ENCODE measurements at regions of chr17 and their contacts with region 1.

Region 1: DNA sequence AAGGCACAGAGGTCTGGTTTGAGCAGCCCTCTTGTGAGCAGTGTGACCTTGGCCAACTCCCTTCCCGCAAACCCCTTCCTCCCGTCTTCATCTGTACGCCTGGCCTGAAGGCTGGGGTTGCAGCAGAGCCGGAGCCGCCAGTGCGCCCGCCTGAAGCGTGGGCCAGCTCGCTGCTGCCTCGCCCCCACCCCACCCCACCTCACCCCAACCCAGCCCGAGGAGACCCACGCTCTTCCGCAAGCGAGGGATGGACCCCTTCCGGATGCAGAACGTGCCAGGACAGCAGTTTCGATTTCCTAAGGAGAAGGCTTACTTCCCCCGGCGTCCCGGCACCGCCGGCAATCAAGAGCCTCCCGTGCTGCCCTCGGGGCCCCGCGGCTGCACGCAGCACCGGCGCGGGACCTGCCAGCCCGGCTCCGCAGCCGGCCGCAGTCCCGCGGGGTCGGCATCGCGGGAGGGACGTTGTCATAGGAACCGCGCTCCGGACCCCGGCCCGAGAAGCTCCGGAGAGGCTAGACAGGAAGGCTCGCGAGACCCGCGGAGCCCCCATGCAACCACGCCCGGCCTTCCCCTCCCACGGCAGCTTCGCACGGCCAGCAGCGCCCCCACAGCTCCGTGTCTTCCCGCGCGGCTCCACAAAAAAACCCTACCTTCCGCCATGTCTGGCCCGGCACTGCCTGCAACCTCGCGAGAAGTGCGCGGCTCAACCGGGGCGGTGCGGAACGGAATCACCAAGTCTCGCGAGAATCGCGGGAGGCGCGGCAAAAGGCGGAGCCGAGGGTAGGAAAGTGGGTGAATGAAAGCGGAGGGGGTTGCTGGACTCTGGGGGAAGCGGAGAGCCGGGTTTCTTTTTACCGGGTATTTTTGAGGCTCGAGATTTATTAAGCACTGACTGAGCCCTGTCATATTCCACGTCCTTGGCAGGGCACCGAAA is at the start of gene ANKFY1:
- DNase-seq: peak; percentile 95 to 98 (median 97)
- ATAC-seq: peak; percentile 97
- H3K4me3 ChIP-seq: peak within 1 kb of the TSS; percentile 75
- H3K4me3 Mint-ChIP-seq: peak within 1 kb of the TSS; percentile 95
- H3K27ac ChIP-seq: peak within 1 kb of the TSS; percentile 60 to 64
- H3K27ac Mint-ChIP-seq: peak within 1 kb of the TSS; percentile 75
- H3K4me1 ChIP-seq: peaks cover 32% of the 10 kb centered on the region
- H3K4me1 Mint-ChIP-seq: peaks cover 36% of the 10 kb centered on the region
- H3K27me3 ChIP-seq: no peaks in the 10 kb centered on the region
- H3K27me3 Mint-ChIP-seq: no peaks in the 10 kb centered on the region
- CTCF ChIP-seq: no peak
- total RNA-seq, gene ANKFY1: 31.8 to 39.1 TPM

Region 2: GRCh38 chr17:4221899-4222659 is 41.5 kb before region 1 on chr17:
- CTCF ChIA-PET with region 1: no interaction called
- POLR2A ChIA-PET with region 1: no interaction called
- intact Hi-C with region 1: no loop called
- DNase-seq: no peak
- ATAC-seq: no peak
- H3K4me3 ChIP-seq: no peak overlapping the region
- H3K4me3 Mint-ChIP-seq: no peak overlapping the region
- H3K27ac ChIP-seq: no peak overlapping the region
- H3K27ac Mint-ChIP-seq: no peak overlapping the region
- H3K4me1 ChIP-seq: no peaks in the 10 kb centered on the region
- H3K4me1 Mint-ChIP-seq: no peaks in the 10 kb centered on the region
- H3K27me3 ChIP-seq: no peaks in the 10 kb centered on the region
- H3K27me3 Mint-ChIP-seq: no peaks in the 10 kb centered on the region
- CTCF ChIP-seq: no peak

Region 3: DNA sequence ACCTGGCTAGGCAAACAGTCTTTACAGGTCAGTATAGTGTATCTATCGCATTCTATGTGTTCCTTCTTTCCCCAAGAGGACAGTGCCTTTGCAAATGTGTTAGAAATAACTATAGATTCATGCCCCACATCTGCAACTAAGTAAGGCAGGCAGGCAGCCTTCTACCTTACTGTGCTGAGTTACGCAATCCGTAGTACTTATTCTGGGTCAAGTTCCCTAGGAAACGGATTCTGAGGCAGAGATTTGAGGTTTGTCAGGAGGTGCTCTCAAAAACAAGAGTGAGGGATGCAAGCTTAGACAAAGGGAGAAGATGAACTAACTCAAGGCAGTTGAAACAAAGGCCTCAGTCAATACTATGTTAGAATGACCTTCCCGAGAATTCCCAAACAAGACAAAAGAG is 13.0 kb after region 1 on chr17:
- CTCF ChIA-PET with region 1: no interaction called
- POLR2A ChIA-PET with region 1: no interaction called
- intact Hi-C with region 1: no loop called
- DNase-seq: no peak
- ATAC-seq: no peak
- H3K4me3 ChIP-seq: no peak overlapping the region
- H3K4me3 Mint-ChIP-seq: no peak overlapping the region
- H3K27ac ChIP-seq: no peak overlapping the region
- H3K27ac Mint-ChIP-seq: peak overlapping the region; percentile 16
- H3K4me1 ChIP-seq: no peaks in the 10 kb centered on the region
- H3K4me1 Mint-ChIP-seq: no peaks in the 10 kb centered on the region
- H3K27me3 ChIP-seq: no peaks in the 10 kb centered on the region
- H3K27me3 Mint-ChIP-seq: no peaks in the 10 kb centered on the region
- CTCF ChIP-seq: no peak

Region 4: GRCh38 chr17:4554997-4555799 is 291.6 kb after region 1 on chr17 and contains the start of gene MYBBP1A:
- CTCF ChIA-PET with region 1: no interaction called
- POLR2A ChIA-PET with region 1: no interaction called
- intact Hi-C with region 1: loop called in 1 of 2 experiments (anchors 5 kb)
- DNase-seq: peak; percentile 91 to 99 (median 97)
- ATAC-seq: peak; percentile 95
- H3K4me3 ChIP-seq: peak within 1 kb of the TSS; percentile 99
- H3K4me3 Mint-ChIP-seq: peak within 1 kb of the TSS; percentile 97
- H3K27ac ChIP-seq: peak within 1 kb of the TSS; percentile 82
- H3K27ac Mint-ChIP-seq: peak within 1 kb of the TSS; percentile 96
- H3K4me1 ChIP-seq: peaks cover 38% of the 10 kb centered on the region
- H3K4me1 Mint-ChIP-seq: peaks cover 32% of the 10 kb centered on the region
- H3K27me3 ChIP-seq: no peaks in the 10 kb centered on the region
- H3K27me3 Mint-ChIP-seq: no peaks in the 10 kb centered on the region
- CTCF ChIP-seq: no peak
- total RNA-seq, gene MYBBP1A: 58.0 to 58.2 TPM

Measured in CD4-positive, alpha-beta T cell (primary cell).